Endothelial cell of umbilical vein (primary cell): ENCODE measurements at regions of chrX and their contacts with region 1.

Region 1: DNA sequence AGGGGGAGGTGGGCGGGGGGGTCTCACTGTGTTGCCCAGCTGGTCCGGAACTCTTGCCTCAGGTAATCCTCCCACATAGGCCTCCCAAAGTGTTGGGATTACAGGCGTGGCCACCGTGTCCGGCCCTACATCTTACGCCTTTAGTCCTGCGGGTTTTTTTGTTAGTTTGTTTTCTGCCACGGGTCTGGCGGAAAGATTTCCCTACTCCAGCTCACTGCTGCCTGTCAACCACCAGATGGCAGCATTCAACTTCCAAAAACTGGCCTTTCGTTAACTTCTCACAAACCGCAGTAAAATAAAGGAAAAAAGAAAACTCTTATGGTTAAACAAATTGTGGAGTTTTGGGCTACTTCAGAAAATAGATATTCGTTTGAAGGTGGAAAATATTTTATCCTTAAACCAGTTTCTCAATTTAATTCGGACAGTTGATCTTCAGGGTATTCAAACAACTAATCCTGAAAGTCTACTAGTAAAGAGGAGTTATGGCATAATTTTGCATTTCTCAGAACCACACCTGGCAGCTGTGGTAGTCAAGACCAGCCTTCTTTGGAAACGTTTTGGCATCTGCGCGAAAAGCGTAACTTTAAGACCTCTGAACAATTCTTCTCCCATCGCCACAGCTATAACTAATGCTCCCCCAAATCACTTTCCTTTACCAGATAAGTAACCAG is 41.1 kb downstream of the LUZP4 start:
- DNase-seq: peak; percentile 65
- H3K4me3 ChIP-seq: peak overlapping the region in 1 of 3 experiments; percentile 21
- H3K27ac ChIP-seq: no peak overlapping the region
- H3K4me1 ChIP-seq: no peaks in the 10 kb centered on the region
- H3K27me3 ChIP-seq: no peaks in the 10 kb centered on the region
- CTCF ChIP-seq: peak; percentile 52 to 55
- POLR2A ChIP-seq: no peak

Region 2: GRCh38 chrX:115311601-115312001 is 19.0 kb before region 1 on chrX:
- CTCF ChIA-PET with region 1: no interaction called
- POLR2A ChIA-PET with region 1: no interaction called
- dilution Hi-C with region 1: no loop called
- intact Hi-C with region 1: no loop called
- DNase-seq: no peak
- H3K4me3 ChIP-seq: no peak overlapping the region
- H3K27ac ChIP-seq: no peak overlapping the region
- H3K4me1 ChIP-seq: no peaks in the 10 kb centered on the region
- H3K27me3 ChIP-seq: no peaks in the 10 kb centered on the region
- CTCF ChIP-seq: no peak
- POLR2A ChIP-seq: no peak

Region 3: GRCh38 chrX:115344885-115345614 is 14.4 kb after region 1 on chrX:
- CTCF ChIA-PET with region 1: interaction called, 10 read pairs
- POLR2A ChIA-PET with region 1: no interaction called
- dilution Hi-C with region 1: no loop called
- intact Hi-C with region 1: no loop called
- DNase-seq: peak; percentile 94
- H3K4me3 ChIP-seq: no peak overlapping the region
- H3K27ac ChIP-seq: peak overlapping the region; percentile 61
- H3K4me1 ChIP-seq: peaks cover 11% of the 10 kb centered on the region
- H3K27me3 ChIP-seq: no peaks in the 10 kb centered on the region
- CTCF ChIP-seq: no peak
- POLR2A ChIP-seq: no peak

Region 4: DNA sequence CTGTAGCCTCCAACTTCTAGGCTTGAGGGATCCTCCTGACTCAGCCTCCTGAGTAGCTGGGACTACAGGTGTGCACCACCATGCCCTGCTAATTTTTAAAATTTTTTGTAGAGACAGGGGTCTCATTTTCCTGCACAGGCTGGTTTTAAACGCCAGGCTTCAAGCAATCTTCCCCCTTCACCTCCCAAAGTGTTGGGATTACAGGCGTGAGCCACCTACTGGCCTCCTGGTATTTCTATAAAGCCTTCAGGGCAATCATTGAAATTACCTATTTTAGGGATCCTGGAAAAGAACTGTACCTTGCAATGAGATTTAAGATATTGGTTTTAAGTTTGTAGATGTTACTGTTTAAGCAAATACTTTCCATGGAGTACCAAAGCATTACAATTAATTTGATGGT is 216.8 kb after region 1 on chrX:
- CTCF ChIA-PET with region 1: interaction called, 14 read pairs
- POLR2A ChIA-PET with region 1: no interaction called
- dilution Hi-C with region 1: no loop called
- intact Hi-C with region 1: no loop called
- DNase-seq: no peak
- H3K4me3 ChIP-seq: no peak overlapping the region
- H3K27ac ChIP-seq: no peak overlapping the region
- H3K4me1 ChIP-seq: peaks cover 15% of the 10 kb centered on the region
- H3K27me3 ChIP-seq: no peaks in the 10 kb centered on the region
- CTCF ChIP-seq: no peak
- POLR2A ChIP-seq: no peak

Region 5: DNA sequence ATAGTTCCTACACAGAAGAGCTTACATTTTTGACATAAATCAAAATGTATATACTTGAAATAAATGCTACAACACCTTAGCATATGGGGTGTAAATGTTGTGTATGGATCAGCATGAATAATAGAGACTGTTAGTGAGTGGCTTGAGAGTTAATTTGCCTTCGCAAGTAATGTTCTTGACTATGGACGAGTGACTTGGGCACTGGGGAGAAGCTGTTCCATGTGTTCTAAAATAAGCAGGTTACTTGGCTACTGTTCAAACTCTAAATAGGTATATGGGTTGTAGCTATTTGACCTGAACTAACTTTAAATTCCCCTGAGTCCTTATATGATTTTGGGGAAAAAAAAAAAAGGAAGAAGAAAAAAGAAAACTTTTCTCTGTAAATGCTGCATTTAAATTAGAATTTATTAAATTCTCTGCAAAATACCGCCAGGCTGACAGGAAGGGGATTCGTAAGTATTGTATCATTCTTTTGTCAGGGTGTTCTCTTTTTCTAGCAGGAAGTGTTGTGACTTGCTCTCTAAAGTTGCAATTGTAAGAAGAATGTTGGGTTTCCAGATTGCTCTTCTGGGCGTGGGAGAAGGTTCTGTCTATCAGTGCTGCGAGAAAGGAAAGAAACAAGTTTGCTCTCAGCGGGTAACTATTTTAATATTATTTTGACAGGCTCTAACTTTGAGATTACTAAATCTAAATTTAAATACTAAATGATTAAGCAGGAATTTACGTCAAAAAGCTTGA is 262.5 kb after region 1 on chrX:
- CTCF ChIA-PET with region 1: interaction called, 3 read pairs
- POLR2A ChIA-PET with region 1: no interaction called
- dilution Hi-C with region 1: no loop called
- intact Hi-C with region 1: loop called (anchors 1 kb)
- DNase-seq: peak; percentile 71
- H3K4me3 ChIP-seq: peak overlapping the region; percentile 7 to 99 (median 84)
- H3K27ac ChIP-seq: peak overlapping the region; percentile 93
- H3K4me1 ChIP-seq: peaks cover 30% of the 10 kb centered on the region
- H3K27me3 ChIP-seq: no peaks in the 10 kb centered on the region
- CTCF ChIP-seq: no peak
- POLR2A ChIP-seq: peak; percentile 75

Region 6: GRCh38 chrX:115642895-115643530 is 312.4 kb after region 1 on chrX:
- CTCF ChIA-PET with region 1: interaction called, 47 read pairs
- POLR2A ChIA-PET with region 1: no interaction called
- dilution Hi-C with region 1: no loop called
- intact Hi-C with region 1: loop called (anchors 1 kb)
- DNase-seq: peak; percentile 69
- H3K4me3 ChIP-seq: no peak overlapping the region
- H3K27ac ChIP-seq: no peak overlapping the region
- H3K4me1 ChIP-seq: peaks cover 10% of the 10 kb centered on the region
- H3K27me3 ChIP-seq: no peaks in the 10 kb centered on the region
- CTCF ChIP-seq: peak; percentile 46 to 48
- POLR2A ChIP-seq: no peak

Region 7: GRCh38 chrX:115679460-115679859 is 348.8 kb after region 1 on chrX:
- CTCF ChIA-PET with region 1: interaction called, 53 read pairs
- POLR2A ChIA-PET with region 1: no interaction called
- dilution Hi-C with region 1: no loop called
- intact Hi-C with region 1: loop called (anchors 1 kb)
- DNase-seq: peak; percentile 38
- H3K4me3 ChIP-seq: no peak overlapping the region
- H3K27ac ChIP-seq: no peak overlapping the region
- H3K4me1 ChIP-seq: no peaks in the 10 kb centered on the region
- H3K27me3 ChIP-seq: no peaks in the 10 kb centered on the region
- CTCF ChIP-seq: peak; percentile 24
- POLR2A ChIP-seq: no peak

Region 8: GRCh38 chrX:115690511-115691216 is 360.0 kb after region 1 on chrX:
- CTCF ChIA-PET with region 1: interaction called, 14 read pairs
- POLR2A ChIA-PET with region 1: no interaction called
- dilution Hi-C with region 1: no loop called
- intact Hi-C with region 1: loop called (anchors 2 kb)
- DNase-seq: peak; percentile 85
- H3K4me3 ChIP-seq: peak overlapping the region in 1 of 3 experiments; percentile 17
- H3K27ac ChIP-seq: peak overlapping the region; percentile 85
- H3K4me1 ChIP-seq: peaks cover 8% of the 10 kb centered on the region
- H3K27me3 ChIP-seq: no peaks in the 10 kb centered on the region
- CTCF ChIP-seq: peak; percentile 54 to 60
- POLR2A ChIP-seq: no peak